ENCODE measurements at regions of chr18 and their contacts with region 1.

Region 1: DNA sequence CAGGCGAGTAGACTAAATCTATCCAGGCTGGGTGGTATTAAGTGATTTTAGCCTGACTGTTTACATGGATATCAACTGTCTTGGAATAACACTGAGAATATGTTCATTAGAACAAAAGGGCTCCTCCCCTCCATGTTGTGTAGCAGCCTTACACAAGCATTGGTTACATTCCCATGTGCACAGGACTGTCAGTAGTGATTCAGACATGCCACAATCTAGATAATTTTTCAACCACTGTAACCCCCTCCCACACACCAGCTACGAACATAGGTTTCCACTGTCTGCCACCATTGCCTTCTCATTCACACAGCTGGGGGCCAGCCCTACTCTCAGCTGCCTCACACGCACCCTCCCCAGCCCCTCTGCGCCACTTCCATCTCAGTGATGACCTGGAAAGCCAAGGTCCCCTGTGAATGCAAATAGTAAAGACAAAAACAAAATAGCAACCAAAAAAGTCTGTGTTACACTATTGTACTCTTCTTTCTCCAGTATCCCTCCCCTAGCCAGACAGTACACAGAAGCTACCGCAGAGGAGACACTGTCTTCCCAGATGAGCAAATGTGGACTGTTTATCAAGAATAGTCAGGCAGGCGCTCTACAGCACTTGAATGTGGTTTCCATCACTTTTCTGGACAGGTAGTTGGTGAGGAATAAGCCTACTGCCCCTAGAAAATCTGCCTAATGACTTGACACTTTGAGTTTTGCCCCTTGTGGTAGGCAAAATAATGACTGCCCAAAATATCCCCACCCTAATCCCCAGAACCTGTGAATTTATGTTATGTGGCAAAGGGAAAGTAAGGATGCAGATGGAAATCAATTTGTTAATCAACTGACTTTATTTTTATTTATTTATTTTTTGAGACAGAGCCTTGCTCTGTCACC is 27.9 kb upstream of the TYMS start:
- DNase-seq: no peak
- H3K4me3 ChIP-seq: no peak overlapping the region
- H3K27ac ChIP-seq: no peak overlapping the region
- H3K4me1 ChIP-seq: no peaks in the 10 kb centered on the region
- H3K27me3 ChIP-seq: no peaks in the 10 kb centered on the region
- CTCF ChIP-seq: peak in 1 of 6 experiments; percentile 10
- POLR2A ChIP-seq: no peak

Region 2: GRCh38 chr18:567122-567521 is 62.4 kb before region 1 on chr18:
- intact Hi-C with region 1: no loop called
- DNase-seq: no peak
- H3K4me3 ChIP-seq: no peak overlapping the region
- H3K27ac ChIP-seq: no peak overlapping the region
- H3K4me1 ChIP-seq: no peaks in the 10 kb centered on the region
- H3K27me3 ChIP-seq: no peaks in the 10 kb centered on the region
- CTCF ChIP-seq: no peak
- POLR2A ChIP-seq: no peak

Region 3: GRCh38 chr18:830315-830901 is 200.9 kb after region 1 on chr18:
- intact Hi-C with region 1: loop called (anchors 5 to 10 kb)
- DNase-seq: peak in 5 of 7 donors; percentile 25 to 31 (median 29)
- H3K4me3 ChIP-seq: no peak overlapping the region
- H3K27ac ChIP-seq: peak overlapping the region in 2 of 5 donors; percentile 26 to 38
- H3K4me1 ChIP-seq: peaks cover 5 to 23% of the 10 kb centered on the region in 2 donors
- H3K27me3 ChIP-seq: no peaks in the 10 kb centered on the region
- CTCF ChIP-seq: no peak
- POLR2A ChIP-seq: no peak